Activated T-helper 2 cell treated with anti-CD3 and anti-CD28 coated beads, Interferon-gamma antibody, Interleukin-2, Interleukin-4, amounts not matched to agents 10 μg/mL and 5 μg/mL and 100 μg/mL, durations not matched to agents 14 hours and 24 hours and 36 hours (primary cell): ENCODE measurements at regions of chr17 and their contacts with region 1.

Region 1: DNA sequence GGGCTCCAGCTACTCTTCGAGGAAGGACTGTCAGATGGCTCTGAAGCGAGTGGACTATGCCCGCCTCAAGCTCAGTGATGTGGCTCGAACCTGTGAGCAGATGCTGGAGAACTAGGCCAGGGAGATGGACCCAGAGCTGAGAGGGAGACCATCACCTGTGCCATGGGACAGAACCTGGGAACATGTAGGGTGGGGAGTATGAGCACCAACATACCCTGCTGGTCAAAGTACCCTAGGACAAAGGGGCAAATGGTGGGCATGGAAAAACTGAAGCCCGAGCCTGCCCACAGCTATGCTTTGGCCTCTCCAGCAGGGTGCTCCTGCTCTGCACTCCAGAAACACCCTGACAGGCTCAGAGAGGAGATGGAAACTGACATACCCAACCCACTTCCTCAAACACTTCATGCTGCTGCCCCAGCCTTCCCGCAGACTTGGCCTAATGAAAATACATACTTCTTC is 1.9 kb downstream of the MED11 start:
- DNase-seq: no peak
- H3K4me3 Mint-ChIP-seq: no peak overlapping the region
- H3K27ac Mint-ChIP-seq: peak overlapping the region; percentile 60
- H3K4me1 Mint-ChIP-seq: peaks cover 33% of the 10 kb centered on the region
- H3K27me3 Mint-ChIP-seq: peaks cover 6% of the 10 kb centered on the region

Region 2: GRCh38 chr17:4678427-4679026 is 54.6 kb before region 1 on chr17:
- intact Hi-C with region 1: no loop called
- DNase-seq: no peak
- H3K4me3 Mint-ChIP-seq: no peak overlapping the region
- H3K27ac Mint-ChIP-seq: no peak overlapping the region
- H3K4me1 Mint-ChIP-seq: peaks cover 18% of the 10 kb centered on the region
- H3K27me3 Mint-ChIP-seq: no peaks in the 10 kb centered on the region

Region 3: GRCh38 chr17:4789901-4790704 is 57.0 kb after region 1 on chr17:
- intact Hi-C with region 1: loop called (anchors 2 kb)
- DNase-seq: peak; percentile 82
- H3K4me3 Mint-ChIP-seq: peak overlapping the region; percentile 90
- H3K27ac Mint-ChIP-seq: peak overlapping the region; percentile 94
- H3K4me1 Mint-ChIP-seq: peaks cover 21% of the 10 kb centered on the region
- H3K27me3 Mint-ChIP-seq: peaks cover 39% of the 10 kb centered on the region

Region 4: DNA sequence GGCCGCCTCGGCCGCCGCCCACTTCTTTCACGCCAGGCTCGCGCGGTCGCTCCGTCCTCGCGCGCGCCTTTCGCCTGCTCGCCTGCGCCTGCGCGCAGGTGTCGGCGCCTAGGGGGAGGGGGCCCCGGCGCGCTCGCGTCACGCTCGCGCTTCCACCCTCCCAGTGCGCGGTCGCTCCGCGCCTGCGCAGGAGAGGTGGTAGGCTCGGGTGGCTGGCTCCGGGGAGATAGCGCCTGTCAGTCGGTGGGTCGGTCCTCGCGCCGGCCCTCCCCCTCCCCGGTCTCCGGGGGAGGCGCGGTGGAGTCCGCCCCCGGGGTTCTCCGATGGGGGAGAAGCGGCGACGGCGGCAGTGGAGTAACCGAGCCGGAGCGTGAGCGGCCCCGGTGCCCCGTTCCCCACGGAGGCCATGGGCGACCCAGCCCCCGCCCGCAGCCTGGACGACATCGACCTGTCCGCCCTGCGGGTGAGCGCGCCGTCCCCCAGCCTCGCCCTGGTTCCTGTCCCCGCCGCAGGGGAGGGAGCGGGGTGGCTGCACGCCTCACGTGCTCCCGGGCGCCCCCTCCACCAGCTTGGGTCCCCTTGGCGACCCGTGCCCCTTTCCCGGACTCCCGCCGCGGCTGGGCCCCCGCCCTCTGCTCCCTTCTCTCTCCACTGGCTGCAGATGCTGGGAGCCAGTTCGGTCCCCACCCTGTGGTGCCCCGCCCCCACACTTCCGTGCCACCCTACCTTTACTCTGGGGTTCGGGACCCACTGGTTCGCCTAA is 100.3 kb after region 1 on chr17 and contains the start of gene MINK1:
- intact Hi-C with region 1: loop called (anchors 1 kb)
- DNase-seq: peak; percentile 87
- H3K4me3 Mint-ChIP-seq: peak within 1 kb of the TSS; percentile 90
- H3K27ac Mint-ChIP-seq: peak within 1 kb of the TSS; percentile 86
- H3K4me1 Mint-ChIP-seq: peaks cover 25% of the 10 kb centered on the region
- H3K27me3 Mint-ChIP-seq: no peaks in the 10 kb centered on the region
- total RNA-seq, gene MINK1: 60.9 and 69.7 TPM in 2 replicates

Region 5: GRCh38 chr17:4872786-4873185 is 139.7 kb after region 1 on chr17:
- intact Hi-C with region 1: no loop called
- DNase-seq: no peak
- H3K4me3 Mint-ChIP-seq: no peak overlapping the region
- H3K27ac Mint-ChIP-seq: no peak overlapping the region
- H3K4me1 Mint-ChIP-seq: peaks cover 5% of the 10 kb centered on the region
- H3K27me3 Mint-ChIP-seq: no peaks in the 10 kb centered on the region

Region 6: GRCh38 chr17:4891411-4892342 is 158.6 kb after region 1 on chr17:
- intact Hi-C with region 1: loop called (anchors 5 kb)
- DNase-seq: no peak
- H3K4me3 Mint-ChIP-seq: no peak overlapping the region
- H3K27ac Mint-ChIP-seq: no peak overlapping the region
- H3K4me1 Mint-ChIP-seq: peaks cover 1% of the 10 kb centered on the region
- H3K27me3 Mint-ChIP-seq: no peaks in the 10 kb centered on the region